ENCODE measurements at regions of chr12 and their contacts with region 1.

Region 1: DNA sequence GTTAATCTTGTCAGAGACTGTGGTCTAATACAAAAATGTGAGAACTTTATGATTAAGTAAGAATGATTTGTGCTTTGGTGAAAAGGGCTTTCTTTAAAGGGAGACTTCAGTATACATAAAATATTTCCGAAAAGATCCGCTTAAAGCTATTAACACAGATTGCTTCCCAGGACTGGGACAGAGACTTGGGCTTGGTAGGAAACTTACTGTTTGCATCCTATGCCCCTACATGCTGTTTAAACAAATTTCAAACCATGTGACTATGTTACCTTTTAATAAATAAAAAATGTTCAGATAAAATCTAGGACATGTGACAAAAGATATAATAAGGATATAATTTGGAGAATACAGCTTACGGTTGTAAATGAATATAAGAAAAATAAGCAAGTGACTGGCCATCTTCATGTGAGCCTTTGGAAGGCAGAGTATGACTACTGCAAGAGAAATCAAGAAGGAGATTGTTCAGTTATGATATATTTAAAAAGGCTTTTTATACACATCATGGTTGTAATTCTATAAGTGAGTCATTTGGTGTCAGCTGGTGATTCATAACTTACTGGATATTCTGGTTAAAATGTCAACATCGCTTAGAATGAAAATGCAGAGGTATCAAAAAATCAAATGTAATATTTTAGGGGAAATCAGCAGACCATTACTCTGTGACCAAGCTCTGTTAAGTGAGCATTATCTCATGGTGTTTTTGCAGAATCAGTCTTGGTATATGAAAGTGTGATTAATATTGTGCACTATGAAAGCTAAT is 234.7 kb upstream of the E2F7 start:
- DNase-seq: peak; percentile 93
- ATAC-seq: peak; percentile 97
- H3K4me3 ChIP-seq: peak overlapping the region; percentile 10; the same call in 1 of the 2 replicates
- H3K27ac ChIP-seq: peak overlapping the region; percentile 71
- H3K4me1 ChIP-seq: peaks cover 25% of the 10 kb centered on the region
- H3K27me3 ChIP-seq: no peaks in the 10 kb centered on the region
- CTCF ChIP-seq: no peak

Region 2: DNA sequence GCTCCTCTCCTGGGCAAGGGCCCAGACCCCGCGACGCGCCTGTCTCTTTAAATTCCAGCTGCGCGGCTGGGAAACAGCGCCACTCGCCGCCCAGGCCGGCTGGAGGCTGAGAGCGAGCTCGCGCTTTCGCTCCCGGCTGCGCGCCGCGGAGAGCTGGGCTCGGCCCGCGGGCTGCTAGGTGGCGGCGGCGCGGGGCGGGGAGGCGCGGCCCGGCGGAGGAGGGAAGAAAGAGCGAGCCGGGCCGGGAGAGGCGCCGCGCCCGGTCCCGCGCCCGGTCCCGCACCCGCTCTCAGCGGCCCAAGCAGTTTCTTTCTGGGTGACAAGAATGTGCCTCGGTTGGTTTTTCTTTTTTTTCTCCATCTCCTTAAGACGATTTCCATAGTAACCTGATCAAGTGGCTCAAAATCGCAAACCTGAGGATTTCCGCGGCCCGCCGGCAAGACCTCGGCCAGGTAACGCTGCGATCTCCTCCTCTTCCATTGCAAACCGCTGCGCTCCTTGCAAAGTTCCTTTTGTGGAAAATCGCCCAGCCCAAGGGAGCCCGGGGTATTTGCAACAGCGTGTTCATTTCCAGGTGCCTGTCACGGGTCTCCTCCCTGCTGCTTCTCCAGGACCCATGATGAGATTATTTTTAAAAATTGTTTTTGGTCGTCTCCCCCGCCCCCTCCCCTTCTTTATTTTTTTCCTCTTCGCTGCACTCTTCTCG is 24.8 kb after region 1 on chr12:
- CTCF ChIA-PET with region 1: interaction called, 4 read pairs
- POLR2A ChIA-PET with region 1: no interaction called
- intact Hi-C with region 1: loop called (anchors 2 kb)
- DNase-seq: peak; percentile 76
- ATAC-seq: peak; percentile 98
- H3K4me3 ChIP-seq: peak overlapping the region; percentile 78
- H3K27ac ChIP-seq: no peak overlapping the region
- H3K4me1 ChIP-seq: peaks cover 4% of the 10 kb centered on the region
- H3K27me3 ChIP-seq: peaks cover 42% of the 10 kb centered on the region
- CTCF ChIP-seq: peak; percentile 65

Region 3: GRCh38 chr12:78359520-78359919 is 1059.4 kb after region 1 on chr12:
- CTCF ChIA-PET with region 1: no interaction called
- POLR2A ChIA-PET with region 1: no interaction called
- intact Hi-C with region 1: no loop called
- DNase-seq: no peak
- ATAC-seq: no peak
- H3K4me3 ChIP-seq: no peak overlapping the region
- H3K27ac ChIP-seq: no peak overlapping the region
- H3K4me1 ChIP-seq: no peaks in the 10 kb centered on the region
- H3K27me3 ChIP-seq: no peaks in the 10 kb centered on the region
- CTCF ChIP-seq: no peak

Measured in PC-3 (cell line).